Activated B cell treated with CpG ODN at 0.5 μM for 24 hours (primary cell): ENCODE measurements at regions of chr14 and their contacts with region 1.

Region 1: DNA sequence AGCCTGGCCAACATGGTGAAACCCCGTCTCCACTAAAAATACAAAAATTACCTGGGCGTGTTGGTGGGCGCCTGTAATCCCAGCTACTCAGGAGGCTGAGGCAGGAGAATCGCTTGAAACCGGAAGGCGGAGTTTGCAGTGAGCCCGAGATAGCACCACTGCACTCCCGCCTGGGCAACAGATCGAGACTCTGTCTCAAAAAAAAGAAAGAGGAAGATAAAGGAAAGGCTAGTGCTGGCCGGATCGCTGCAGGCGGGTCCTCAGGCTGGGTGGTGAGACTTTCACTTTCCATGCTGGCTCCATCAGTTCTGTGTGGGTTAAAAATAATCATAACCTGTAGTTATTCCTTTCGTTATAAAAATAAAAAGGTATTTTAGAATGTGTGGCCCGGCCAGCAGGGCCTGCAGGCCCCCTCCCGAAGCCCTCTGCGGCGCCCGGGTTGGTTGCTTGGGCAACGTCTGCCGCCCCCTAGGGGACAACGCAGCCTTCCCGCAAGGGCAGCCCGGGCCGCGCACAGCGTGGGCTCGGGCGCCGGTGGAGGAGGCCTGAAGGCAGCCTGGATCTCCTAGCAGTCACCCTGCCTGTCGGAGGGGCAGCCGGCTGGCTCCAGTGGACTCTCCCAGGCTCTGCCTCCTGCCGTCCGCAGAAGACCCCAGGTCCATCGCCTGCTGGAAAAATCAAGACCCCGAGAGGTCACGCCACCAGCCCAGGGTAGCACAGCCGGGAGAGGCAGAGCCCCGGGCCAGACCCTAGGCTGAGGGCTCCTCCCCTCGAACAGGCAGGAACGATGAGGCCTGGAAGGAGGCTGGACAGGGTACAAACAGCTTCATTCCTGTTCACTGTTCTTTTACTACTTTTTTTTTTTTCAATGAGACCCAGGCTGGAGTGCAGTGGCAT is 5.0 kb upstream of the SLC25A47 start:
- DNase-seq: peak; percentile 76
- ATAC-seq: peak; percentile 98
- H3K4me3 Mint-ChIP-seq: peak overlapping the region; percentile 80
- H3K27ac Mint-ChIP-seq: peak overlapping the region; percentile 82
- H3K4me1 Mint-ChIP-seq: peaks cover 3% of the 10 kb centered on the region
- H3K27me3 Mint-ChIP-seq: no peaks in the 10 kb centered on the region
- CTCF ChIP-seq: peak; percentile 78

Region 2: GRCh38 chr14:100341301-100342031 is 23.3 kb after region 1 on chr14:
- CTCF ChIA-PET with region 1: no interaction called
- POLR2A ChIA-PET with region 1: interaction called, 3 read pairs
- intact Hi-C with region 1: loop called (anchors 1 kb)
- DNase-seq: no peak
- ATAC-seq: peak; percentile 93
- H3K4me3 Mint-ChIP-seq: peak overlapping the region; percentile 41
- H3K27ac Mint-ChIP-seq: peak overlapping the region; percentile 92
- H3K4me1 Mint-ChIP-seq: peaks cover 32% of the 10 kb centered on the region
- H3K27me3 Mint-ChIP-seq: no peaks in the 10 kb centered on the region
- CTCF ChIP-seq: no peak

Region 3: DNA sequence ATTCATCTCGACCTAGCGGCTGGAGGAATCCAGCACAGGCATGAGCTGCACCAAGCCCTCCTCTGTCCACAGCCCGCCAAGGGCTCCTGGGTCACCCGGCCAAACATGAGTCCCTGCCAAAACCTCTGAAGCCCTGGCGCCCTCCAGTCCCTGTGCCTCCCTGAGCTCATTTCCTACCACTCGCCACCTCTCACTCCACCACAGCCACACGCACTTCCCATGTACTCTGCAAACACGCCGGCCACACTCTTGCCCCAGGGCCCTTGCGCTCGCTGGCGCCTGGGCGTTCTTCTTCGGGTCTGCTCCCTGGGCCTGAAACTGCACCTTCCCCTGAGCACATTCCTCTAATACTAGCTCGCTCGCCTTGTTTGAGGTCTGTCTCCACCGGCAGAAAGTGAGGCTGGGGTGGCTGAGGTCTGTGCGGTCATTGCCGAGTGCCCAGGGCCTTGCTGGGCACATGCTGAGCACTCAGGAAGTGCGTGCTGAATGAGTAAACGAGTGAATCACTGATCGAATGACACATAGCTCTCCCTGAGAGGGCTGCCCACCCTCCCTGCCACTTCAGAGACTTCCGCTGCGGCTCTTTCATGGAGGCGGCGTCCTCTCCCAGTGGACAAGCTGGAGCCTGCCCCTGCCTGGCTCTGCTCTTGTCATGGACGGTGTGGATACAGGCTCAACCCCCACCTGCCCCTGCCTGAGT is 374.8 kb after region 1 on chr14:
- CTCF ChIA-PET with region 1: no interaction called
- POLR2A ChIA-PET with region 1: no interaction called
- intact Hi-C with region 1: no loop called
- DNase-seq: no peak
- ATAC-seq: no peak
- H3K4me3 Mint-ChIP-seq: no peak overlapping the region
- H3K27ac Mint-ChIP-seq: no peak overlapping the region
- H3K4me1 Mint-ChIP-seq: no peaks in the 10 kb centered on the region
- H3K27me3 Mint-ChIP-seq: peaks cover 4% of the 10 kb centered on the region
- CTCF ChIP-seq: no peak